ENCODE measurements at regions of chr5 and their contacts with region 1.

Region 1: DNA sequence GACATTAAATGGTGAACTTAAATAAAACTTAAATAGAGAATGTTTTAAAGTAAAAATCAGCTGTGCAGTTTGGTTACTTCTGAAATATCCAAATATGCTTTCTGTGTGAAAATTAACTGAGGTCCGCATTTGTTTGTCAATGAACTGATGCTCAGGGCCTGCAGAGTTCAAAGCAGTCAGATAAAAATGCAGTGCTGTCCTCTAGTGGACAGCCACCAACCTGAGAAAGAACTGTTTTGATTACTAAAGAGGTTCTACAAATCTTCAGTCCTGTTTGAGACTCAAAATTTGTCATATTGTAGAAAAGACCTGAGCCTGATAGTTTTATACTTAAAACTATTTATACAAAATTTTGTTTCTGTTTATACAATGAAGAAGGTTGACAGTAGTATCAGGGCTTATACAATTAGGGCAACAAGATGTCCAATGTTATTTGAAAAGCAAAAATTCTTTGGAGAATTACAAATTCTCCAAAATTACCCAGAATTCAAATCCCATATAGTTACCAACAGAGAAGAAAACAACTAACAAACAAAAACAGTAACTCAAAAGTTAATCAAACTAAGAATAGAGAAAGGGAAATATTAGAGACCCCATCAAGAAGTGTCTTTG is 232.3 kb upstream of the TBCA start:
- DNase-seq: no peak
- H3K4me3 ChIP-seq: no peak overlapping the region
- H3K27ac ChIP-seq: no peak overlapping the region
- H3K4me1 ChIP-seq: no peaks in the 10 kb centered on the region
- H3K27me3 ChIP-seq: no peaks in the 10 kb centered on the region
- CTCF ChIP-seq: peak; percentile 80

Region 2: DNA sequence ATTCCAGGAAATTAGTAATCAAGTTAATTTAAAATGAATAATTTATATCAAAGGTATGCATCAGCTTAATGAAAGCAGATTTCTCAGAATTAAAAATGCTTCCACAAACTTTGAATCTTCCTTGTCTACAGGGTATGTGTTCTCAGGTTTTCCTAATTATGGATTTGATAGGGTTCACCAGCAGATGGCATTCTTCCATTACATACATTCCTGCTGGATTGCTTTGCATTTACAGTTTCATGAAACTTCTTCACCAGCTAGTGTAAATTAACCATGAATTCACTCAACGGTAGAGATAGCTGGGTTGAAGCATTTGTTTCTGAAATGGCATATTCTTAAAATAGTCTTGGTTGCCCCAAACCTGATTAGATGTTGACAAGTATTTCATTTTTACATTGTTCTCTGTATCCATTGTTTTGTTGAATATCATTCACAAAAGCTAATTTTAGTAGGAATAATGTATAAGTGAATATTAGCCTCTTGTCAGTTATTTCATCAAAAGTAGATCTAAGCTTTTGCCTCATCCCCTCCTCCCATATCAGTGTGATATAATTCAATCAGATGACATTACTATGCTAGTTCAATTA is 447.7 kb before region 1 on chr5:
- CTCF ChIA-PET with region 1: interaction called, 5 read pairs
- POLR2A ChIA-PET with region 1: no interaction called
- intact Hi-C with region 1: loop called (anchors 2 kb)
- DNase-seq: peak in 1 of 2 experiments; percentile 40
- H3K4me3 ChIP-seq: no peak overlapping the region
- H3K27ac ChIP-seq: no peak overlapping the region
- H3K4me1 ChIP-seq: no peaks in the 10 kb centered on the region
- H3K27me3 ChIP-seq: no peaks in the 10 kb centered on the region
- CTCF ChIP-seq: peak; percentile 71

Region 3: DNA sequence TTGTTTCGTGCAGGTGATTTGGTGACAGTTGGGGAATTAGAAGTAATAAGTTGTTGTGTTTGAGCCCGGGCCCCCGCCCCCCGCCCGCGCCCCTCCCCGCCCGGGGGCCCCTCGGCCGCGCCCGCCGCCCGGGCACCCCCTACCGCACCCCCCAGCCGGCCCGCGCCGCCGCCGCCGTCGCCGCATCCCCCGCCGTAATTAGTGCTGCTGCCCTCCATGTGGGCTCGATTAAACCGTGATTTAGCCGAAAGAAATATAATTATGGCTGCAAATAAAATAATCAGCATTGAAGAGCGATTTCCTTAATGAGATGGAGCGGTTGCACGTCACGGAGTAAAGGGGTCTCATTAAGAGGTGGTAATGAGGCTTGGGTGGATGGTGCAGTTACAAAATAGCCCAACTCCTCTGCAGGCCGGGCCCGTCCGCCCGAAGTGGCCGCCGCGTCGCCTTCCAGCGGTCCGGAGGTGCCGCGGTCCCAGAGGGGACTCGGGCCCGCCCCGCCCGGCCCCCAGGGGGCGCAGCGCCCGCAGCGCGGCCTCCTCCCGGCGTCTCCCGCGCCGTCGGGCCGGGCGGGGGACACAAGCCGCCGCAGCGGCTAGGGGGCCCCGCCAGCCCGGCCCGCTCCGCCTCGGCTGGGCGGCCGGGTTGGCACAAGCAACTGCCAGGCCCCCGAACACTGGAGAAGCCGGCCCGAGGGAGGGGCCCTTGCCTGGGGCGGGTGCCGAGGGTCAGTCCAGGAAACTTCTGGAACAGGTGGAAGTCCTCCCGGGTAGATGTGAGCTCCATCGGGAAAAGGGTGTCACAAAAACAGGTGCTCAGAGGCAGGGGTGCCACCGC is 363.1 kb before region 1 on chr5:
- CTCF ChIA-PET with region 1: no interaction called
- POLR2A ChIA-PET with region 1: no interaction called
- intact Hi-C with region 1: loop called (anchors 10 kb)
- DNase-seq: peak in 1 of 2 experiments; percentile 50
- H3K4me3 ChIP-seq: no peak overlapping the region
- H3K27ac ChIP-seq: no peak overlapping the region
- H3K4me1 ChIP-seq: no peaks in the 10 kb centered on the region
- H3K27me3 ChIP-seq: peaks cover 23% of the 10 kb centered on the region; the same call in 1 of the 2 replicates
- CTCF ChIP-seq: no peak

Region 4: DNA sequence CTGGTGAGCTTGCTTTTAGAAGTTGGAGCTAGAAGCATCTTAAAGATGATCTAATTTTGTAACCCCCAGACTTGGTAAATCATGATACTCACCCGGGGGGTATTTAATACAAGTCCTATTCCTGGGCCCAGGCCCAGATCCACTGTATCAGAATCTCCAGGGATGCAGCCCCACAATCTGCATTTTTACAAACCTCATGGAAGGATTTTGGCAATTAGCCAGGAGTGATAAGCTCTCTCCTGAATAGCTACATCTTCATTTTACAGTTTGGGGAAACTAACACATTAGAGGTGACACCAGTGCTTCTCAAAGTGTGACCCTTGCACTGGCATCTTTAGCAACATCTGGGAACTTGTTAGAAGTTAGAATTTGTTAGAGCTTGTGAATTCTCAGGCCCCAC is 338.8 kb before region 1 on chr5:
- CTCF ChIA-PET with region 1: no interaction called
- POLR2A ChIA-PET with region 1: no interaction called
- intact Hi-C with region 1: no loop called
- DNase-seq: no peak
- H3K4me3 ChIP-seq: no peak overlapping the region
- H3K27ac ChIP-seq: no peak overlapping the region
- H3K4me1 ChIP-seq: no peaks in the 10 kb centered on the region
- H3K27me3 ChIP-seq: no peaks in the 10 kb centered on the region
- CTCF ChIP-seq: no peak

Region 5: GRCh38 chr5:77867194-77867691 is 141.2 kb before region 1 on chr5:
- CTCF ChIA-PET with region 1: no interaction called
- POLR2A ChIA-PET with region 1: no interaction called
- intact Hi-C with region 1: loop called (anchors 5 kb)
- DNase-seq: no peak
- H3K4me3 ChIP-seq: no peak overlapping the region
- H3K27ac ChIP-seq: no peak overlapping the region
- H3K4me1 ChIP-seq: no peaks in the 10 kb centered on the region
- H3K27me3 ChIP-seq: no peaks in the 10 kb centered on the region
- CTCF ChIP-seq: peak; percentile 45; the same call in 1 of the 2 replicates